A673 (cell line): ENCODE measurements at regions of chr1 and their contacts with region 1.

Region 1: GRCh38 chr1:16946646-16947045 is 24.9 kb downstream of the CROCC start:
- DNase-seq: no peak
- H3K4me3 ChIP-seq: no peak overlapping the region
- H3K27ac ChIP-seq: no peak overlapping the region
- H3K4me1 ChIP-seq: no peaks in the 10 kb centered on the region
- H3K27me3 ChIP-seq: no peaks in the 10 kb centered on the region
- CTCF ChIP-seq: no peak

Region 2: DNA sequence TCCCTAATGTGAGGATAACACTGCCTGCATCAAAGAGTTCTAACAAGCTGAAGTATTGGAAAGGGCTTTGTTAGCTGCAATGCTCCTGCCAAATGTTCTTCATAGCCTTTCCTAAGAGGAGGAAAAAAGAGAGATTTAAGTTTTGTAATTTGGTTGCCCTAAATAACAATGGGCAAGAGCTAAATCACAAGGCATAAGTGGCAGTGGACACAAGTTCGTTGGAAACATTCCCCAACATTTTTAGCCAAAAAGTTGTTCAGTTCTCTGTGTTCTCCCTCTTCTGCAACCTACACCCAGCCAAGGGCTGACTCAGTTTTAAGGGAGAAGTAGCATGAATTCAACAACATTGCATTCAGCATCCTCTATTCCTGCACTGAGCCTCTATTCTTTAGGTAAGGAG is 1136.6 kb before region 1 on chr1:
- CTCF ChIA-PET with region 1: no interaction called
- POLR2A ChIA-PET with region 1: no interaction called
- intact Hi-C with region 1: no loop called
- DNase-seq: no peak
- H3K4me3 ChIP-seq: no peak overlapping the region
- H3K27ac ChIP-seq: no peak overlapping the region
- H3K4me1 ChIP-seq: no peaks in the 10 kb centered on the region
- H3K27me3 ChIP-seq: no peaks in the 10 kb centered on the region
- CTCF ChIP-seq: no peak

Region 3: GRCh38 chr1:16618719-16619118 is 327.9 kb before region 1 on chr1:
- CTCF ChIA-PET with region 1: interaction called, 41 read pairs
- POLR2A ChIA-PET with region 1: interaction called, 4 read pairs
- intact Hi-C with region 1: loop called (anchors 1 kb)
- DNase-seq: no peak
- H3K4me3 ChIP-seq: no peak overlapping the region
- H3K27ac ChIP-seq: peak overlapping the region; percentile 1
- H3K4me1 ChIP-seq: peaks cover 6% of the 10 kb centered on the region
- H3K27me3 ChIP-seq: no peaks in the 10 kb centered on the region
- CTCF ChIP-seq: no peak

Region 4: DNA sequence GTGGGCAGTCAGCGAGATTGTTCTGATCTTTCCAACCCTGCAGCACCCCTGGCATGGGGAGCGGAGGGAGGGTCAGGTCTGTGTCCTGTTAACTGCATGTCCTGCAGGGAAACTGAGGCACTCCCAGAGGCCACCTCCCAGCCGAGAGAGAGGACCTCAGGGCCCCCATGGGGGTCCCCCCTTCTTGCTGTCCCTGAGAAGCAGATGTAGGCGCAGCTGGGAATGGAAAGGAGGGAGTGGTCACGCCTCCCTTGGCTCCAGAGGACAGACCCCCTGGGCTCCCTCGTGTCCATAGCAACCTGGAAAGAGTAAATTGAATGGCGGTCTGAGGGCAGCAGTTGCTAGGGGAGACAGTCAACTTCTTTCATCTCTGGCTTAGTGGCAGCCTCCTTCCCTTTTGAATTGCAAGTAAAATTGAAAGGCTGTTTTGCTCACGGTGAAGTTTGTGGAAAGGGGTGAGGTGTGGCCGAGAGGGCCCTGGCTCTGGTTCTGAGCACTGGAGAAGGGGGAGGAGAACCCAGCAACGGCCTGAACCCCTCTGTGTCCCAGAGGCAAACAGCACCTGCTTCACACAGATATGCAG is 20.1 kb before region 1 on chr1:
- CTCF ChIA-PET with region 1: no interaction called
- POLR2A ChIA-PET with region 1: no interaction called
- intact Hi-C with region 1: no loop called
- DNase-seq: peak; percentile 40
- H3K4me3 ChIP-seq: no peak overlapping the region
- H3K27ac ChIP-seq: no peak overlapping the region
- H3K4me1 ChIP-seq: peaks cover 10% of the 10 kb centered on the region
- H3K27me3 ChIP-seq: no peaks in the 10 kb centered on the region
- CTCF ChIP-seq: no peak

Region 5: DNA sequence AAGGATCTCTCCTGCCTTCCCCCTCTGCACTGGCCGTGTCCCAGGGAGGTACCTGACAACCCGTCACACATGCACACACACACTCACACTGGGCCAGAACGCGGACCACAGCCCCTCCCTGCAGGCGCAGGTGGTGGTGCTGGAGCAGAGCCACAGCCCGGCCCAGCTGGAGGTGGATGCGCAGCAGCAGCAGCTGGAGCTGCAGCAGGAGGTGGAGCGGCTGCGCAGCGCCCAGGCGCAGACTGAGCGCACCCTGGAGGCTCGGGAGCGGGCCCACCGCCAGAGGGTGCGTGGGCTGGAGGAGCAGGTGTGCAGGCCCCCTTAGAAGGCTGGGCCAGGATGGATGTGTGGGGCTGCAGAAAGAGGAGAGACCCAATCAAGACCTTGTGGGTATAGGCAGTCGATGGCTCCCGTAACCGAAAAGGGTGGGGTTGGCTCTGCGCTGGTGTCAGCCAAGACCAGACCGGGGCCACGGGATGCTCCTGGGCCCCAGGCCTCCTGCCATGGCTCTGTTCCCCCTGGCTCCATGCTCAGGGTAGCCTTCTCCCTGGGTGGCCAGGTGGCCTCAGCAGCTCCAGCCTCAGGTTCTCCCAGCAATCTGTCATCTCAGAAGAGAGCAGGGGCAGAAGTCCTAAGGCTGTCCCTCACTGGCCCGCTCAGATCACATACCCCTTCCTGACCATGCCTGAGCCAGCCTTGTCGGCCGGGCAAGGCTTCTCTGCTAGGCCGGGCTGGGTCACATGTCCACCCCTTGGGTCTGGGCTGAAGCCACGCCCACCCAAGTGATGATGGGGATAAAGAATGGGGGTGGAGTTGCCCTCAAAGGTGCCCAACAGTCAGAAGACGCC is 24.9 kb after region 1 on chr1:
- CTCF ChIA-PET with region 1: no interaction called
- POLR2A ChIA-PET with region 1: no interaction called
- intact Hi-C with region 1: no loop called
- DNase-seq: no peak
- H3K4me3 ChIP-seq: no peak overlapping the region
- H3K27ac ChIP-seq: no peak overlapping the region
- H3K4me1 ChIP-seq: no peaks in the 10 kb centered on the region
- H3K27me3 ChIP-seq: no peaks in the 10 kb centered on the region
- CTCF ChIP-seq: no peak

Region 6: GRCh38 chr1:17045634-17046333 is 99.1 kb after region 1 on chr1:
- CTCF ChIA-PET with region 1: interaction called, 12 read pairs
- POLR2A ChIA-PET with region 1: no interaction called
- intact Hi-C with region 1: loop called (anchors 2 kb)
- DNase-seq: peak; percentile 82
- H3K4me3 ChIP-seq: peak overlapping the region; percentile 49
- H3K27ac ChIP-seq: peak overlapping the region; percentile 57
- H3K4me1 ChIP-seq: peaks cover 8% of the 10 kb centered on the region
- H3K27me3 ChIP-seq: no peaks in the 10 kb centered on the region
- CTCF ChIP-seq: peak; percentile 82